SK-N-SH (cell line): ENCODE measurements at regions of chr5 and their contacts with region 1.

Region 1: DNA sequence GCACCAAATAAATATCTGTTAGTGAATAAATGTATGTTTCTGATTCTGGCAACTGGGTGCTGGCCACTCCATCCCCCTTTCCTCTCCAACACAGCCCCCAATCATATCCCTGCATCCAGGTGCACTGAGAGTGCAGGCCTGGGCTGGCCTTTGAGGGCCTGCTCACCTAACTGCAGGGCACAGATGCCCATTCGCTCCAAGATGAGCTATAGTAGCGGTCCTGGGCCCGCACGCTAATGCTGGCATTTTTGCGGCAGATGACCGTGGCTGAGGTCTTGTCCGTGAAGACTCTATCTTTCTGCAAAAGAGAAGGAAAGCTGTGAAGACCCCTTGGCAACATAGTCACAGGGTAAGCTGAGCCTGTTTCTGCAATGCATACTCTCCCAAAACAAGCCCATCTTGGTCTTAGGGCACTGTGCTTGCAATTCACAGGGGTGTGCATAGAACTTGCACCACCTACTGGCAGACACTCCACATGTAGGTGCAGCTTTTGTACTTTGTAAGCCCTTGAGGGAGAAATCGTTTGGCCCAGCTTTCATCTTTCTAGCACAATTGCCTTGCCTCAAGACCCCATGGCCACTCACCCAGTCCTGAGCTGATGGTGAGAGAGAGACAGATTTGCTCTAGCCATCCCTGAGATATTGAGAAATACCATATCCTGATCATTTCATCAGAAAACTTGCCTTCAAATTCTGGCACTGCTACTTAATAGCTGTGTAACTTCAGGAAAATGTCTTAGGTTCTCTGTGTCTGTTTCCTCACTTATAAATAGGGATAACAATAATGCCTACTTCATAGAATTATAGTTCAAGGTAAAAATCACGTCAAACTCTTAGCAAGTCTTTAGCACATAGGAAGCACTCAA is 13.5 kb downstream of the IL12B start:
- DNase-seq: peak; percentile 66
- H3K4me3 ChIP-seq: no peak overlapping the region
- H3K27ac ChIP-seq: no peak overlapping the region
- H3K4me1 ChIP-seq: peaks cover 0 to 15% of the 10 kb centered on the region in 2 experiments; a peak in 2 of 4 replicates
- H3K27me3 ChIP-seq: peaks cover 4% of the 10 kb centered on the region; the same call in 1 of the 2 replicates
- CTCF ChIP-seq: peak; percentile 69
- EP300 ChIP-seq: no peak
- RAD21 ChIP-seq: peak; percentile 76

Region 2: DNA sequence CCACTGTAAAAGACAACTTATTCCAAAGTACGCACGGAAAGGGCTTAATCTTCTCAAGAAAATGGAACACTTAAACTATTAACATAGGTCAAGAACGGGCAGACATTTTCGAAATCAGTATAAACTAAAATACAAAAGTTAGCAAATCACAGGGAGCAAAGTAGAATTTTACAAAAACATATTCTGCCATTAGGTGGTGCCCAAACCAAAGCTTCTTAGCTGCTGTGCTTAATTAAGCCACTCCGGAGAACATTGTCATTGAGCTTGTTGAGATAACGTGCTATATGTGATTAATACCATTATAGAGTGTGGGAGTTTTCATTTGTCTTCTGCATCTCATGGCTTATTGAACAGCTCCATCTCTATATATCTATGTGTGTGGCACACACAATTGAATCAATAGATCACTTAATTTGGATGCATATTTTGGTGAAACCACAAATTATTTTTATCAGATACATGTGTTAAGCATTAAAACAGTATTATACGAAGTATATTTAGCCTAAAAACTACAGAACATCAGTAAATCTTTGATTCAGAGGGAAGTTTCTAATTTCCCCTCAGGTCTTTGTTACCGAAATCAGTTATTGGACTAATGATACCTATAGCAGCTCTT is 30.2 kb before region 1 on chr5:
- CTCF ChIA-PET with region 1: interaction called, 14 read pairs
- POLR2A ChIA-PET with region 1: no interaction called
- DNase-seq: peak; percentile 37
- H3K4me3 ChIP-seq: no peak overlapping the region; a peak in 1 of 4 replicates
- H3K27ac ChIP-seq: no peak overlapping the region
- H3K4me1 ChIP-seq: no peaks in the 10 kb centered on the region; a peak in 1 of 4 replicates
- H3K27me3 ChIP-seq: no peaks in the 10 kb centered on the region
- CTCF ChIP-seq: peak; percentile 64
- EP300 ChIP-seq: no peak
- RAD21 ChIP-seq: peak; percentile 86

Region 3: DNA sequence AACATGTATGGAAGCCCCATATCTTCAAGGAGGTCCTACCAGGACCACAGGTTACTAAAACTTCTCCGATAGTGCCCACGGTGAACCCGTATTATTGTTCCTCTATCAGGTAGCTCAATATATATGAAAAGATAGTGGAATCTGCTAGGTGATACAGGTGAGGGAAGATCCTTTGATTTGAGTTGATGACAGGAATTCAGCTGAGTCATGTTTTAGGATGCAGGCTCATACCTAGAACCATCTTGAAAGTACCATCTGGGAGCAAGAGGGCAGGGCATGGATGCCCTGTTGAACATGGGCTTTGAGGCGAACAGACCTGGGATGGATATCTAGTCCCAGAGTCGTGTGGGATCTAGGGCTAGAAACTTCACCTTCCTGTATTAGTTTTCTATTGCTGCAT is 21.8 kb before region 1 on chr5:
- CTCF ChIA-PET with region 1: interaction called, 14 read pairs
- POLR2A ChIA-PET with region 1: no interaction called
- DNase-seq: no peak
- H3K4me3 ChIP-seq: no peak overlapping the region
- H3K27ac ChIP-seq: no peak overlapping the region
- H3K4me1 ChIP-seq: no peaks in the 10 kb centered on the region
- H3K27me3 ChIP-seq: no peaks in the 10 kb centered on the region
- CTCF ChIP-seq: no peak
- EP300 ChIP-seq: no peak
- RAD21 ChIP-seq: no peak

Region 4: DNA sequence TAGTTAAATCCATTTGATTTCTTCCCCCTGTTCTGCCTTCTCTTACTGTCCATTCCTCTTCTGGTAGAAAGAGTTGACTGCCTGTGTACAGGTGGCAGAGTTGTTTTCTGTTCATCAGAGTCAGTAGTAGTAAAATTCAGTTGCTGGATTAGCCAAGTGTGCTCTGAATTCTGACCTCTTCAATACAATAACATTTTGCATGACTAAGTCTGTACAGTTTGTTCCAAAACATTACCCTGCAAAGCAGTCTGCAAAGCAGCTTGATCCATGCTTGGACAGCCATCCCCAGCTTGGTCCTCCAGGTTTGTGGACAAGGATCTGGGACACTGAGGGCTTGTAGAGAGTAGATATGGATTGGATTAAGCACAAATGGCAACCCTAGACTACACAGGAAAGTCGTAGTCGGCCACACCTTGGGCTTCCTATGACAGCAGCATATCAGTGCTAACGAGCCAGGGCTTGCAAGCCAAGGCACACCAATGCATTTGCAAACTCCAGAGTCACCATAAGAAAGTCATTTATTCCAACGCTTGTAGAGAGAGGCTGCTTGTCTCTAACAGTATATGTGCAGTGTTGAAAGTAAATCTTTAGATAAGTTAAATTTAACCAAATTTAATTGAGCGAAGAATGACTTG is 11.7 kb before region 1 on chr5:
- CTCF ChIA-PET with region 1: interaction called, 19 read pairs
- POLR2A ChIA-PET with region 1: no interaction called
- DNase-seq: no peak
- H3K4me3 ChIP-seq: no peak overlapping the region
- H3K27ac ChIP-seq: no peak overlapping the region
- H3K4me1 ChIP-seq: no peaks in the 10 kb centered on the region; a peak in 1 of 4 replicates
- H3K27me3 ChIP-seq: no peaks in the 10 kb centered on the region
- CTCF ChIP-seq: no peak
- EP300 ChIP-seq: no peak
- RAD21 ChIP-seq: no peak

Region 5: GRCh38 chr5:159331093-159331973 is 14.6 kb after region 1 on chr5:
- CTCF ChIA-PET with region 1: interaction called, 41 read pairs
- POLR2A ChIA-PET with region 1: no interaction called
- DNase-seq: peak; percentile 86
- H3K4me3 ChIP-seq: peak overlapping the region; percentile 54 to 63
- H3K27ac ChIP-seq: no peak overlapping the region
- H3K4me1 ChIP-seq: peaks cover 0 to 7% of the 10 kb centered on the region in 2 experiments; a peak in 1 of 4 replicates
- H3K27me3 ChIP-seq: no peaks in the 10 kb centered on the region
- CTCF ChIP-seq: peak; percentile 83
- EP300 ChIP-seq: no peak
- RAD21 ChIP-seq: peak; percentile 44

Region 6: GRCh38 chr5:159419576-159419975 is 102.8 kb after region 1 on chr5:
- CTCF ChIA-PET with region 1: no interaction called
- POLR2A ChIA-PET with region 1: no interaction called
- DNase-seq: peak; percentile 36
- H3K4me3 ChIP-seq: no peak overlapping the region
- H3K27ac ChIP-seq: no peak overlapping the region
- H3K4me1 ChIP-seq: no peaks in the 10 kb centered on the region; a peak in 1 of 4 replicates
- H3K27me3 ChIP-seq: no peaks in the 10 kb centered on the region
- CTCF ChIP-seq: peak; percentile 25; the same call in 1 of the 2 replicates
- EP300 ChIP-seq: no peak
- RAD21 ChIP-seq: no peak